CD8-positive, alpha-beta T cell (primary cell): ENCODE measurements at regions of chr15 and their contacts with region 1.

Region 1: DNA sequence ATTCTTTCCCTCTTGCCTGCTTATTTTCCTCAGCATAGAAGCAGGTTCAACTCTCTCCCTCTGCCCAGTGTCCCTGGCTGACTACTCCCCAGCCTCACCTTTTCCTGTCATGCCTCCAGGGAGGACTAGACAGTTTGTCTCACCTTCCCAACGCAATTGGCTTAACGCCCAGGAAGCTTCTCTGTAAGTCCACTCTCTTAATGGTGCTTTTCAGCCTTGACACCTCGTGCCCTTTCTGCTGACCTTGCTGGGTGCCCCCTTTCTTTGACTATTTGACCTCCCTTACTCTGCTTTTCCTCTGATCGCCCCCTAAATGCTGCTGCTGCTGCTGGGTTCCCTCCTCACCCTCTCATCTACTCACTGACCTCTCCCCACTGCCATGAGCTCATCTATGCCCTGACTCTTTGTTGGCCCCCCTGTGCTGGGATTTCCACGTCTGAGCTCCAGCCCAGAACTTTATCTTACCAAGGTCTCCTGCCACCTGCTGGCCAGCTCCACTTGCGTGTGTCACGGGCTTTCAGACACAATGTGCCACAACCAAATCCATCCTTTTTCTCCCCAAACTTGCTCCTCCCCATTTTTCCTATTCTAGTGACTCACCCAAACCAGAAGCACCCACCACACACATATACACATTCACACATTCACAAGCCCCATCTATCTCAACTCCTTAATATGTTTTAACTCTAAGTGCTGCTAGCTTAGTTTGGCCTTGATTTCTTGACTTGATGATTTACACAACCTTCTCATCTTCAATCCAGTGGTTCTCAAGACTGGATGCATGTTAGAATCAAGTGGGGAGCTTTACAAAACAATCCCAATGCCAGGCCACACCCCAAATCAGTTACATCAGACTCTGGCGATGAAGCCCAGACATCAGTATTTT is 16.6 kb downstream of the EPB42 start:
- DNase-seq: peak; percentile 15 to 64 (median 50)
- ATAC-seq: peak; percentile 71
- H3K4me3 ChIP-seq: no peak overlapping the region
- H3K4me3 Mint-ChIP-seq: no peak overlapping the region
- H3K27ac ChIP-seq: no peak overlapping the region
- H3K27ac Mint-ChIP-seq: no peak overlapping the region
- H3K4me1 ChIP-seq: no peaks in the 10 kb centered on the region
- H3K4me1 Mint-ChIP-seq: peaks cover 3% of the 10 kb centered on the region
- H3K27me3 ChIP-seq: no peaks in the 10 kb centered on the region
- H3K27me3 Mint-ChIP-seq: peaks cover 7% of the 10 kb centered on the region
- CTCF ChIP-seq: peak; percentile 62

Region 2: DNA sequence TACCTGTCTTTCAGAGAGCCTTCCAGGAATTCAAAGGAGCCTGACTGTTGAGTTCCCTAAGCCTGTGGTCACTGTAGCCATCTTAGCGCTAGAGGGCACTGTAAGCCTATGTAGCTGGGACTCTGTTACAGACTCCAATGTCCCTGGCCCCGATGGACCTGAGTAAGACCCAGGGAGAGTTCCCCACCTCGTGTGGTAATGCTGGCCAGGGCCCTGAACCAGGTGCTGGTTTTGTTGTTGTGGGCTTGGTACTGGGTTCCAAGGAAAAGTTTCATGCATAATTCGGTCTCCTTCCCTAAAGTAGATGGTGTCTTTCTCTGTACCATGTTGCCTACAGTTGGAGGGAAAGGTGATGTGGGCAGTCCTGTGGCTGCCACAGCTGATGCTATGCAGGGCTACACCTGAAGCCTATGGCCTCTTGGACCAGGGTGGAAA is 499.8 kb before region 1 on chr15:
- CTCF ChIA-PET with region 1: no interaction called
- POLR2A ChIA-PET with region 1: no interaction called
- intact Hi-C with region 1: loop called in 1 of 2 experiments (anchors 2 kb)
- DNase-seq: peak; percentile 29 to 76 (median 59)
- ATAC-seq: peak; percentile 84
- H3K4me3 ChIP-seq: no peak overlapping the region
- H3K4me3 Mint-ChIP-seq: no peak overlapping the region
- H3K27ac ChIP-seq: no peak overlapping the region
- H3K27ac Mint-ChIP-seq: no peak overlapping the region
- H3K4me1 ChIP-seq: no peaks in the 10 kb centered on the region
- H3K4me1 Mint-ChIP-seq: no peaks in the 10 kb centered on the region
- H3K27me3 ChIP-seq: no peaks in the 10 kb centered on the region
- H3K27me3 Mint-ChIP-seq: no peaks in the 10 kb centered on the region
- CTCF ChIP-seq: peak; percentile 64

Region 3: GRCh38 chr15:42955518-42955917 is 248.7 kb before region 1 on chr15:
- CTCF ChIA-PET with region 1: no interaction called
- POLR2A ChIA-PET with region 1: no interaction called
- intact Hi-C with region 1: no loop called
- DNase-seq: no peak
- ATAC-seq: no peak
- H3K4me3 ChIP-seq: no peak overlapping the region
- H3K4me3 Mint-ChIP-seq: no peak overlapping the region
- H3K27ac ChIP-seq: no peak overlapping the region
- H3K27ac Mint-ChIP-seq: no peak overlapping the region
- H3K4me1 ChIP-seq: no peaks in the 10 kb centered on the region
- H3K4me1 Mint-ChIP-seq: no peaks in the 10 kb centered on the region
- H3K27me3 ChIP-seq: no peaks in the 10 kb centered on the region
- H3K27me3 Mint-ChIP-seq: no peaks in the 10 kb centered on the region
- CTCF ChIP-seq: no peak

Region 4: DNA sequence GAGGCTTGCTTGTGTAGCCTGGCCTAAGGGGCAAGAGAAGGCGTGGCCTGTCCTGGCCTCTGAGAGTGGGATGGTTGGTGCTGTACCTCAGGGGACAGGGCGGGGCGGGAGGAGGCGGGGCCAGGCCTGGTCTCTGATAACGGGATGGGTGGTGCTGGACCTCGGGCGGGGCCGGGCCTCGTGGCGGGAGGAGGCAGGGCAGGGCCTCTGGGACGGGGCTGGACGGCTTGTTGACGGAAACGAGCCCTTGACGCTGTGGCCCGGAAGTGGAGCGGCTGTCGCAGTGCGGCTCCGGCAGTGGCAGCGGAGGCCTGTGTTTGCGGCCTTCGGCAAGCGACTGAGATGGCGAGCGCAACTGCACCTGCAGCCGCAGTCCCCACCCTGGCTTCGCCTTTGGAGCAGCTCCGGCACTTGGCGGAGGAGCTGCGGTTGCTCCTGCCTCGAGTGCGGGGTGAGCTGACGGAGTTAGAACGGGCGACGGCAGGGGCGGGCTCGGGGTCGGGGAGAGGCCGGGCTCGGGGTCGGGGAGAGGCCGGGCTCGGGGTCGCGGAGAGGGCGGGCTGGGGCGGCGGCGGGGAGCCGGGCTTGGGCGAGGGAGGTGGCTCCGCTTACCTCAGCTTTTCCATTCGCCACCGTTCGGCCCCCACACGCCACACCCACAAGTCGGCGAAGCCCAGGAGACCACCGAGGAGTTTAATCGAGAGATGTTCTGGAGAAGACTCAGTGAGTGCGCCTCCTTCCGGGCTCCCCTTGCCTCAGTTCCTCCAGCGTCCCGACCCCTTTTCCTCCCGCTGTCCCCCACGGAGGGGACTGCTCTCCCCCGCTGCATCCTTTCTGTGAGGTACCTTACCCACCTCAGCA is 18.9 kb before region 1 on chr15 and contains the start of gene CCNDBP1:
- CTCF ChIA-PET with region 1: interaction called, 13 read pairs
- POLR2A ChIA-PET with region 1: interaction called, 3 read pairs
- intact Hi-C with region 1: loop called in 1 of 2 experiments (anchors 1 kb)
- DNase-seq: peak; percentile 73 to 93 (median 86)
- ATAC-seq: peak; percentile 75
- H3K4me3 ChIP-seq: peak within 1 kb of the TSS; percentile 82 to 97
- H3K4me3 Mint-ChIP-seq: peak within 1 kb of the TSS; percentile 97
- H3K27ac ChIP-seq: peak within 1 kb of the TSS; percentile 87 to 91
- H3K27ac Mint-ChIP-seq: peak within 1 kb of the TSS; percentile 98
- H3K4me1 ChIP-seq: peaks cover 18% of the 10 kb centered on the region
- H3K4me1 Mint-ChIP-seq: peaks cover 43% of the 10 kb centered on the region
- H3K27me3 ChIP-seq: no peaks in the 10 kb centered on the region
- H3K27me3 Mint-ChIP-seq: no peaks in the 10 kb centered on the region
- CTCF ChIP-seq: peak; percentile 56
- total RNA-seq, gene CCNDBP1: 80.3 to 81.1 TPM

Region 5: DNA sequence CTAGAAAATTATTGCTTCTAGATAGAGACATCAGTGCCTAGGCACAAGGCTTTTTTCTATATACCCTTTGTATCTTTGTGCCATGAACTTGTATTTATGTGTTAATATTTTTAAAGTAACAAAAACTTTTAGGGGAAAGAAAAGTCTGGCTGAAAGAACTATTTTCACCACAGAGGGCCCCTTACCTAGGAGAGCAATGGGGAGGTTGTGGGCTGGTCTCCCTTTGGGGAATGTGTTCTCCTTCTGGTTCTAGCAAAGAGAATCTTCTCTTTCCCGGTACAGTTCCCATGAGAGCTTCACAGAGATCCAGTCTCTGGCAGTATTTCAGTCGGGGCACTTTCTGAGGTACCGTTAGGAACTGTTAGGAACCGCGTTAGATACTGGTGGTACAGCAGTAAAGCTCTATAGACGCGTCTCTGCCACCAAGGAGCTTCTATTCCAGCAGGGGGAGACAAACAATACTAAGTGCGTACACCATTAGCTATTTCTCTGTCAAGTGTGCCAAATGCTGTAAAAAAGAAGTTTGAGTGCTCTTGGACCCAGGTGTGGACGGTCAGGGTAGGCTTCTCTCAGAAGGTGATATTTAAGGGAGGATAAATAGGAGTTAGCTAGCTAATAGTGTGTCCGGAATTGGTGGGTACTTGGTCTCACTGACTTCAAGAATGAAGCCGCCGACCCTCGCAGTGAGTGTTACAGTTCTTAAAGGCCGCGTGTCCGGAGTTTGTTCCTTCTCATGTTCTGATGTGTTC is 21.1 kb after region 1 on chr15:
- CTCF ChIA-PET with region 1: interaction called, 19 read pairs
- POLR2A ChIA-PET with region 1: no interaction called
- intact Hi-C with region 1: no loop called
- DNase-seq: peak in 8 of 9 experiments; percentile 17 to 78 (median 44)
- ATAC-seq: peak; percentile 86
- H3K4me3 ChIP-seq: no peak overlapping the region
- H3K4me3 Mint-ChIP-seq: peak overlapping the region; percentile 56
- H3K27ac ChIP-seq: no peak overlapping the region
- H3K27ac Mint-ChIP-seq: no peak overlapping the region
- H3K4me1 ChIP-seq: no peaks in the 10 kb centered on the region
- H3K4me1 Mint-ChIP-seq: peaks cover 8% of the 10 kb centered on the region
- H3K27me3 ChIP-seq: no peaks in the 10 kb centered on the region
- H3K27me3 Mint-ChIP-seq: peaks cover 10% of the 10 kb centered on the region
- CTCF ChIP-seq: peak; percentile 73